Natural killer cell (primary cell): ENCODE measurements at regions of chrX and their contacts with region 1.

Region 1: DNA sequence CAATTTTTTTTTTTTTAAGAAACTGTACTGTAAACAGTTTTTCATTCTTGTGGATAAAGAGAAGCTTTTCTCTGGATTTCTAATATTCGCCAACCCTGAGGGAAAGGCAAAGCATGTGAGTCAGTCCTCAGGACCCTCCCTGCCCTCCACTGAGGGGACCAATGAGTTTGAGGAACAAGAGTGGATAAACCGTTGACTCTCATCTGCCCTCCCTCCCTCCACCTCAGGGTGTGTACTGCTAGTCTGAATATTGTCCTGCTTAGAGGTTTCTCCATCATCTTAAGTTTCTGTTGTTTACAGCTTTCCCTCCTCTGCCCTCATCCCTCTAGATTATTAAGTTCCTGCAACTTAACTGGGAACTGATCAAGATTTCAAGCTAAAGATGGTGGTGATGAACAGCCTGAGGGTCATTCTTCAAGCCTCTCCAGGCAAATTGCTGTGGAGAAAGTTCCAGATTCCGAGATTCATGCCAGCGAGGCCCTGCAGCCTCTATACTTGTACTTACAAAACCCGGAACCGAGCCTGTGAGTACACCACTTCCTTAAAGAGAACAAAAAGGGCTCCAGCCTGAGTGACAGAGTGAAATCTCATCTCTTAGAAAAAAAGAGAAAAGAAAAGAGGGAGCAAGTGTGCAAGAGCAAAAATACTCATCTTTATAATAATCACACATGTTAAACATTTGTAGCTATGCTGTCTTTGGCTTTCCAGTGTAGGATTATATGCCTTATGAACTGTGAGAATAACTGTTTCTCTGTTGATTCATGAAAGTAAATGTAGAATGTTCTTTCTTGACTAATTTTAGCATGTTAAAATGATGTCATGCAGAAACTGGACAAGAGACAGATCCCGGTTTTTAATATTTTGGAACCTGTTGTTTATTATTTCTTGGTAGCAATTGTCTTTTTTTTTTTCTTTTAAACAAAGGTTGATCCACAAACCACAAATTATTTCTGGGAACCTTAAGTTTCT is 11.9 kb downstream of the CA5B start:
- DNase-seq: peak in 1 of 2 donors; percentile 62
- ATAC-seq: peak; percentile 32 to 71 (median 32)
- H3K4me3 ChIP-seq: no peak overlapping the region
- H3K4me3 Mint-ChIP-seq: peak overlapping the region; percentile 92
- H3K27ac ChIP-seq: peak overlapping the region; percentile 100
- H3K27ac Mint-ChIP-seq: peak overlapping the region; percentile 94 to 96
- H3K4me1 ChIP-seq: peaks cover 51% of the 10 kb centered on the region
- H3K4me1 Mint-ChIP-seq: peaks cover 73 to 89% of the 10 kb centered on the region in 2 donors
- H3K27me3 ChIP-seq: no peaks in the 10 kb centered on the region
- H3K27me3 Mint-ChIP-seq: no peaks in the 10 kb centered on the region
- CTCF ChIP-seq: no peak

Region 2: DNA sequence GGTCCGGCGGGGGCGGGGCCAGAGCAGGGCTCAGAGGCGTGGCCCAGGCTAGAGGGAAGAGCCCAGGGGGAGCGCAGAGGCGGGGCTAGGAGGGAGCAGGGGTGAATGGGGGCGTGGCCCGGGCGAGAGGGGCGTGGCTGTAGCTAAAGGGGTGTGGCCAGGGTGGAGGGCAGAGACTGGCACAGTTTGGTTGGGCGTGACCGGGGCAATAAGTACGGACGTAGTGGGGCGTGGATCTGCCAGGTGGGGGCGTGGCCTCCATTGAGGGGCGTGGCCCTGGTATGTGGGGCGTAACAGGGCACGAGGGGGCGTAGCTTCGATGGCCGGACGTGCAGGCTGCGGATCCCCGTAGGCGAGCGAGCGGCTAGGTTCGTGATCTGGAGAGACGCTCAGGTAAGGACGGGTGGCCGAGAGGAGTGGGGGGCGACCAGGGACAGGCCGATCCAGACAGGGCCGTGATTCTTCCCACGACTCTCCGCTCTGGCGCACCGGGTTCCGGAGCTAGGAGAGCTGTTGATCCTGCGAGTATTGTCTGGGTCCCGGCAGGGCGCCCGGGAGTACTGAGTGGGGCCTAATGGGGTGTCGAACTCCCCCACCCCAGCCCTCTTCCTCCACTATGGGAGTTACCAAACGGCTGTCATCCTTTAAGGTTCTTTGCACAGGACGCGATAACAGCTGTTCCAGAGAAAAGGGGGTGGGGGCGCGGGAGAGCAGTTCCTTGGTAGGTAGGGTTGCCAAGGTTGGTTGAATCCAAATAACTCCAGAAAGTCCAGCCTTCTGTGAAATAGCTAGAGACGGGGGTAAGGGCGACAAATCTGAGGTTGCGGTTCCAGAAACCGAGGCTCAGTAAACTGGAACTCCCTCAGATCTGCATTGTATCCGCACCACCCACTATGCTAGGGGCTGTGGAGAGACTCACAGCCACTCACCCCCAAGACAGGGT is 11.7 kb before region 1 on chrX and contains the start of gene CA5B:
- intact Hi-C with region 1: loop called (anchors 1 kb)
- DNase-seq: peak; percentile 96 to 97
- ATAC-seq: peak; percentile 92 to 99 (median 92)
- H3K4me3 ChIP-seq: peak within 1 kb of the TSS; percentile 69
- H3K4me3 Mint-ChIP-seq: peak within 1 kb of the TSS; percentile 95
- H3K27ac ChIP-seq: peak within 1 kb of the TSS; percentile 85
- H3K27ac Mint-ChIP-seq: peak within 1 kb of the TSS; percentile 87 to 93
- H3K4me1 ChIP-seq: peaks cover 20% of the 10 kb centered on the region
- H3K4me1 Mint-ChIP-seq: peaks cover 54 to 57% of the 10 kb centered on the region in 2 donors
- H3K27me3 ChIP-seq: no peaks in the 10 kb centered on the region
- H3K27me3 Mint-ChIP-seq: no peaks in the 10 kb centered on the region
- CTCF ChIP-seq: no peak
- total RNA-seq, gene CA5B: 56.3 to 111 (median 80.5) TPM

Region 3: DNA sequence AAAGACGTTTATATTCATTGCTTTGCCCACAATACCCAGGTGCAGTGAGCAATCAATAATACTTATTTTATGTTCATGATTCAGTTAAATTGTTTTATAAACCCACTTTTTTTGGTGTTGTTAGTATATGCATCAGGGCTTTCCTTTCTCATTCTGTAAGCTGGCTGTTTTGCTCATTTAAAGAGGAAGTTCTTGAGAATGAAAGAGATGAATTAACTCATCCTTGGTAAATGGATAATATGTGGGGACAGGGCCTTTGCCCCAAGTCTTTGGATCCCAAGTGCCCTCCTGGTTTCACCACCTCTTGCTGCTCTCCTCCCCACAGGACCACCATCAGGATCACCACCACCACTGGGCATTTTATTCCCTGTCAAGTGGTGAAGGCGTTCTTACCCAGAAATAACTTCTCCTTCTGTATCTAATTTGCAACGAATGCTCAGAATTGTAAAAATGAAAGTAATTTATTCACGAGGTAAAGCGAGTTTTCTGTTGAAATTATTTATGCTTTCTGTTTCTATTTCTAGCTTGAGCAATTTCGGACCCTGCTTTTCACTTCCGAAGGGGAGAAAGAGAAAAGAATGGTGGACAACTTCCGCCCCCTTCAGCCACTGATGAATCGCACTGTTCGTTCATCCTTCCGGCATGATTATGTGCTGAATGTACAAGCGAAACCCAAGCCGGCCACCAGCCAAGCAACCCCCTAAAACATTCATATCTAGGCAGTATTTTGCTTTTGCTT is 32.2 kb after region 1 on chrX:
- intact Hi-C with region 1: loop called (anchors 5 kb)
- DNase-seq: peak in 1 of 2 donors; percentile 48
- ATAC-seq: peak; percentile 47 to 82 (median 64)
- H3K4me3 ChIP-seq: peak overlapping the region; percentile 27
- H3K4me3 Mint-ChIP-seq: peak overlapping the region; percentile 89
- H3K27ac ChIP-seq: peak overlapping the region; percentile 95
- H3K27ac Mint-ChIP-seq: peak overlapping the region; percentile 92 to 94
- H3K4me1 ChIP-seq: peaks cover 9% of the 10 kb centered on the region
- H3K4me1 Mint-ChIP-seq: peaks cover 5 to 6% of the 10 kb centered on the region in 2 donors
- H3K27me3 ChIP-seq: no peaks in the 10 kb centered on the region
- H3K27me3 Mint-ChIP-seq: no peaks in the 10 kb centered on the region
- CTCF ChIP-seq: no peak

Region 4: DNA sequence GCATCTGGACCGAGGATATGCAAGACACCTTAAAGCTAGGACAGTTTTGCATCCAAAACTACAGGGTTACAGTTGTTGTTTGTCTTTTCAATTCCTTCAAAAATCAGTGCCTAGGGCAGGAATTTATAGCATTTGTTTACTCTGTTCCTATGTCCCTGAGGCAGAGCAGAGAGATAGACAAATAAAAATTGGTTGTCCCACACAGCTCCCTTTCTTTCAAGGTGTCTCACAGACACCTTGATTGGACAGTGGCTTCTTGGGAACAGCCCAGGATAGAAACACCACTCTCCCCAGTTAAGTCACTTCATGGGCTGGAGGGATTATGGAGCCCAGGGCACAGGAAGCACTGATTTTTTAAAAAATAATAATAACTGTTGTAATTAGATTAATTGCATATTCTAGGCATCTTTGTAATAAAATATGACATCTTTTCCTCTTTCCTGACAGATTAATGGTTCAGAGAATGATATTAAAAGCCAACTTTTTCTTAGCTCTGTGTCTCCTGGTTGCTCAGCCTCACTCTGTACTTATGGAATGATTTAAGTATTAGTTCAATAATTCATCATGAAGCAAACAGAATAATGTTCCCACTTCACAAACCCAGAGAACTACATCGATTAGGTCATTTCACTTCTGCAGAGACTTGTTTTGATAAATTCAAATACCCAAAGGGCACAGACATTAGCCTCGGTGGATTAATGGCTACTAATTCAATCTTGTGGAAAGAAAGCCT is 425.6 kb after region 1 on chrX:
- intact Hi-C with region 1: no loop called
- DNase-seq: no peak
- ATAC-seq: no peak
- H3K4me3 ChIP-seq: no peak overlapping the region
- H3K4me3 Mint-ChIP-seq: no peak overlapping the region
- H3K27ac ChIP-seq: no peak overlapping the region
- H3K27ac Mint-ChIP-seq: no peak overlapping the region
- H3K4me1 ChIP-seq: no peaks in the 10 kb centered on the region
- H3K4me1 Mint-ChIP-seq: no peaks in the 10 kb centered on the region
- H3K27me3 ChIP-seq: no peaks in the 10 kb centered on the region
- H3K27me3 Mint-ChIP-seq: peaks cover 1 to 72% of the 10 kb centered on the region in 2 donors
- CTCF ChIP-seq: no peak